HCT116 (cell line): ENCODE measurements at regions of chr1 and their contacts with region 1.

Region 1: GRCh38 chr1:230310381-230311163 is 115.6 kb downstream of the PGBD5 start:
- DNase-seq: peak; percentile 60
- ATAC-seq: peak; percentile 93
- H3K4me3 ChIP-seq: no peak overlapping the region
- H3K27ac ChIP-seq: no peak overlapping the region
- H3K4me1 ChIP-seq: peaks cover 3 to 15% of the 10 kb centered on the region in 2 experiments; a peak in 3 of 4 replicates
- H3K27me3 ChIP-seq: 0 out of 2 replicates have a peak, but pooled peaks cover 7% of the 10 kb centered on the region
- CTCF ChIP-seq: peak; percentile 82 to 88 (median 88)
- POLR2A ChIP-seq: no peak
- RAD21 ChIP-seq: peak; percentile 98

Region 2: GRCh38 chr1:229514578-229515275 is 795.8 kb before region 1 on chr1:
- CTCF ChIA-PET with region 1: no interaction called
- POLR2A ChIA-PET with region 1: no interaction called
- RAD21 ChIA-PET with region 1: no interaction called
- intact Hi-C with region 1: loop called (anchors 1 kb)
- DNase-seq: peak; percentile 45
- ATAC-seq: peak; percentile 97
- H3K4me3 ChIP-seq: no peak overlapping the region
- H3K27ac ChIP-seq: no peak overlapping the region
- H3K4me1 ChIP-seq: no peaks in the 10 kb centered on the region
- H3K27me3 ChIP-seq: no peaks in the 10 kb centered on the region
- CTCF ChIP-seq: peak; percentile 66 to 87 (median 83)
- POLR2A ChIP-seq: no peak
- RAD21 ChIP-seq: peak; percentile 70

Region 3: GRCh38 chr1:229558571-229559335 is 751.8 kb before region 1 on chr1 and contains the start of gene ABCB10:
- CTCF ChIA-PET with region 1: no interaction called
- POLR2A ChIA-PET with region 1: no interaction called
- RAD21 ChIA-PET with region 1: no interaction called
- intact Hi-C with region 1: loop called (anchors 5 kb)
- DNase-seq: peak; percentile 95
- ATAC-seq: peak; percentile 80
- H3K4me3 ChIP-seq: peak within 1 kb of the TSS; percentile 61 to 84
- H3K27ac ChIP-seq: peak within 1 kb of the TSS; percentile 93
- H3K4me1 ChIP-seq: peaks cover 10 to 24% of the 10 kb centered on the region in 2 experiments
- H3K27me3 ChIP-seq: no peaks in the 10 kb centered on the region
- CTCF ChIP-seq: peak; percentile 81 to 87 (median 81)
- POLR2A ChIP-seq: peak; percentile 62
- RAD21 ChIP-seq: peak; percentile 45
- total RNA-seq, gene ABCB10: 20.3 TPM

Region 4: DNA sequence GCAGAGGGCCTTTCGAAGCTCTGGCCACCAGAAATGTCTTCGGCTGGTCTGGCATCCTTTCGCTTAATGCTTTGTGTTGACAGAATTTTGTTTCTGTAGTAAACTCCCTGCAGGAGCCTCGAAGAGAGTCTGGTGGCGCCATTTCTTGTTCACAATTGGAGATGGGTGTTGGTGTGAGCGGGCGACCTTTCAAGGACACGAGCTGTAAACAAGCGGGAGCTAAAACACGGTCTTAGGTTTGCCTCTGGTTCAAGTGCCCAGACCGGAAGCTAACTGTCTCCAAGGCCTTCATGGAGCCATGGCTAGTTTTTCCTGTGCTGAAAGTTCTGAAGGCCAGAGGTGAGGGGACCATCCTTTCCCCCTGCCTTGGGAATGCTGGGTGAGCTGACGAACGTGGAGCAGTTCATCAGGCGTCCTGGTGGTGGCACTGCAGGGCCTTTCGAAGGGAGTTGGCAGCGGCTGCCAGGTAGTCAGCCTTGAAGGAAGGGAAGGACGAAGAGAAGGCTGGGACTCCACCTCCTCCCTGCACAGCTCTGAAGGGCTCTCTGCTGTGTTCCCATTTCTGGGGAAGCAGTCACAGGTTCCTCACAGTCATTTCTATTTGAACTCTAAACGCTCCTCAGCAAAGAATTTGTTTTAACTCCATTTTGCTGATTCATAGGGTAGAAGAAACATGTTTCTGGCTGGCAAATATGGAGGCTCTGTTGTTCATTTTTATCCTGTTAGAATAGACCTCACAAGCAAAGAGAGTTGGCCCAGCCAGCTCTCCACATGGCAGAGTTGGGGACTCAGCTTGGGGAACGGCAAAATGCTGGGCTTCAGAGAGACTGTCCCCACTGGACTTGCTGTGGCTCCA is 649.3 kb before region 1 on chr1:
- CTCF ChIA-PET with region 1: interaction called, 4 read pairs
- POLR2A ChIA-PET with region 1: no interaction called
- RAD21 ChIA-PET with region 1: interaction called in 1 of 2 experiments, 3 read pairs
- intact Hi-C with region 1: loop called (anchors 1 kb)
- DNase-seq: peak; percentile 32
- ATAC-seq: peak; percentile 96
- H3K4me3 ChIP-seq: no peak overlapping the region
- H3K27ac ChIP-seq: no peak overlapping the region; the same call in 1 of the 2 replicates
- H3K4me1 ChIP-seq: no peaks in the 10 kb centered on the region
- H3K27me3 ChIP-seq: no peaks in the 10 kb centered on the region
- CTCF ChIP-seq: peak; percentile 70 to 94 (median 89)
- POLR2A ChIP-seq: no peak
- RAD21 ChIP-seq: peak; percentile 84

Region 5: DNA sequence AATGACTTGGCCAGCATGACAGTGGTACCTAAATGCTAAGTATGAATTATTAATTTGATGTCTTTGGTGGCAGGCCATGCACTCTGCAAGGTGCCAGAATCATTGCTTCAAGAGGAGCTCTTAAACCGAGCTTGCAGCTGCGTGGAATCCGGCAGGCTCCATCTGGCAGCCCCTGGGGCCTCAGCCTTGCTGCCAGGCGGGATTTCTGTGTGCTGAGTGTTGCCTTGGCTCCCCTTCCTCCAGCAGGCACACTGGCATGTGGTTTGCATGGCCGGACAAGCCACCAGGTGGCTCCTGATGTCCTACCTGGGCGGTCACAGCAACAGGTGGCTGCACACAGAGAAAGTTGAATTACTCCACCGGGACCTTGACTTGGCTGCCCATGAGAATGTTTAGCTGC is 529.1 kb before region 1 on chr1:
- CTCF ChIA-PET with region 1: no interaction called
- POLR2A ChIA-PET with region 1: no interaction called
- RAD21 ChIA-PET with region 1: no interaction called
- intact Hi-C with region 1: loop called (anchors 1 kb)
- DNase-seq: peak; percentile 7
- ATAC-seq: peak; percentile 69; the same call in 1 of the 2 replicates
- H3K4me3 ChIP-seq: no peak overlapping the region
- H3K27ac ChIP-seq: no peak overlapping the region
- H3K4me1 ChIP-seq: no peaks in the 10 kb centered on the region
- H3K27me3 ChIP-seq: peaks cover 7% of the 10 kb centered on the region; the same call in 1 of the 2 replicates
- CTCF ChIP-seq: peak; percentile 35 to 39 (median 37); a peak in 5 of 6 replicates
- POLR2A ChIP-seq: no peak
- RAD21 ChIP-seq: peak; percentile 65

Region 6: GRCh38 chr1:229848752-229849677 is 461.6 kb before region 1 on chr1:
- CTCF ChIA-PET with region 1: interaction called, 3 read pairs
- POLR2A ChIA-PET with region 1: no interaction called
- RAD21 ChIA-PET with region 1: no interaction called
- intact Hi-C with region 1: loop called (anchors 5 kb)
- DNase-seq: peak; percentile 39
- ATAC-seq: peak; percentile 88
- H3K4me3 ChIP-seq: no peak overlapping the region
- H3K27ac ChIP-seq: no peak overlapping the region
- H3K4me1 ChIP-seq: no peaks in the 10 kb centered on the region
- H3K27me3 ChIP-seq: no peaks in the 10 kb centered on the region; the same call in 1 of the 2 replicates
- CTCF ChIP-seq: peak; percentile 28 to 83 (median 78); a peak in 5 of 6 replicates
- POLR2A ChIP-seq: no peak
- RAD21 ChIP-seq: peak; percentile 54

Region 7: DNA sequence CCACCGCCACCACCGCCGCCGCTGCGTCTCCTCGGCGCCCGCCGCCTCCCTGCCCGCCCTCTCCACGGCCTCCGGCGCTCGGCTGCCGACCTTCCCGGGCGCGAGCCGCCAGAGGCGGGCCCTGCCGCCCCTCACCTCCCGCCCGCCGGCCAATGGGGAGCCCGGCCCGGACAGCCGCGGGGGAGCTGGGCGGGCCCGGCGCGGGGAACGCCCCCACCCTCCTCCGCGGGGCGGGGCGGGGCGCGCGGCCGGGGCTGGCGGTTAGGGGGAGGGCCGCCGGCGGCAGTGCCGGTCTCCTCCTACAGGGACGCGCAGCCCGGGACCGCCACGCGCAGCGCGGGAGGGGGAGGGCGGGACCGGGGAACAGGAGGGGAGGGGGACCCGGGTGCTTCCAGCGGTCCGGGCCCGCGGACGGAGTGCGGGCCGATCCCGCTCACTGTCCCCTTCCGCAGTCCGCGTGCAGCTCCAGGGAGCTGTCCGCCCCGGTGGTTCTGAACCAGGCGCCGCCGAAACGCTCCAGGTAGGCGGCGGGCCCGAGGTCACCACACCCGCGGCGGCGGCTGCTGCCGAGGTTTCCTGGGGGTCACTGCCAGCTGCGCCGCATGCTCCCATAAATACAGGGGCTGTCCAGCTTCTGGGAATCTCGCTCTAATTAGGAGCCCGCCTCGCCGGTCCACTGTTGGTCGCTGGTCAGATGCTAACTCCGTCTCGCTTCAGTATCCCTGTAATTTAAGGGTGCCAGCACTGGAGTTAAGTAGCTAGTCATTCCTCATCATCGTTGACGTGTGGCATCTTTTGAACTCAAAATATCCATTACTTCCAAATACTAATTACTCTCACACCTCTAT is 115.9 kb after region 1 on chr1 and contains the start of gene PGBD5:
- CTCF ChIA-PET with region 1: no interaction called
- POLR2A ChIA-PET with region 1: no interaction called
- RAD21 ChIA-PET with region 1: no interaction called
- intact Hi-C with region 1: no loop called
- DNase-seq: no peak
- ATAC-seq: peak; percentile 93
- H3K4me3 ChIP-seq: peak within 1 kb of the TSS in 1 of 2 experiments; percentile 30; a peak in 2 of 4 replicates
- H3K27ac ChIP-seq: no peak within 1 kb of the TSS
- H3K4me1 ChIP-seq: no peaks in the 10 kb centered on the region
- H3K27me3 ChIP-seq: peaks cover 29% of the 10 kb centered on the region
- CTCF ChIP-seq: no peak
- POLR2A ChIP-seq: no peak
- RAD21 ChIP-seq: no peak
- total RNA-seq, gene PGBD5: 0.27 TPM

Region 8: DNA sequence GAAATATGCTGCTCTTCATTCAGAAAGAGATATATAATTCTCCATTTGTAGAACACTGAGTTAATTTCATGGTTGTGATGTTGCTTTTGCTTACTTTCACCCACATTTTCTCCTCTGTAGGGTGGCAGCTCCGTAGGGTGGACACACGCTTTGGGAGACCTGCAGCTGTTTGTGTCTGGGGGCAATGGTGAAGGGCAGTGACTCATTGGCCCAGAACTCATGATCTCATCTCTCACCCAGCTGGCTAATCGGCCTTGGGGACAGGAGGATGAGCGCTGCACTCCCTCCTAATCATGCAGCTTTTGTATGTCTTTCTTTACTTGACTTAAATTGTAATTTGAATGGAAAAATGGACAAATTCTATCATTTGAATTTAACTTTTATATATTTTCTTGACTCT is 1325.6 kb after region 1 on chr1:
- CTCF ChIA-PET with region 1: no interaction called
- POLR2A ChIA-PET with region 1: no interaction called
- RAD21 ChIA-PET with region 1: no interaction called
- intact Hi-C with region 1: no loop called
- DNase-seq: no peak
- ATAC-seq: no peak
- H3K4me3 ChIP-seq: no peak overlapping the region
- H3K27ac ChIP-seq: no peak overlapping the region
- H3K4me1 ChIP-seq: peaks cover 0 to 22% of the 10 kb centered on the region in 2 experiments; a peak in 3 of 4 replicates
- H3K27me3 ChIP-seq: 0 out of 2 replicates have a peak, but pooled peaks cover 3% of the 10 kb centered on the region
- CTCF ChIP-seq: no peak
- POLR2A ChIP-seq: no peak
- RAD21 ChIP-seq: no peak